ENCODE measurements at regions of chr16 and their contacts with region 1.

Region 1: DNA sequence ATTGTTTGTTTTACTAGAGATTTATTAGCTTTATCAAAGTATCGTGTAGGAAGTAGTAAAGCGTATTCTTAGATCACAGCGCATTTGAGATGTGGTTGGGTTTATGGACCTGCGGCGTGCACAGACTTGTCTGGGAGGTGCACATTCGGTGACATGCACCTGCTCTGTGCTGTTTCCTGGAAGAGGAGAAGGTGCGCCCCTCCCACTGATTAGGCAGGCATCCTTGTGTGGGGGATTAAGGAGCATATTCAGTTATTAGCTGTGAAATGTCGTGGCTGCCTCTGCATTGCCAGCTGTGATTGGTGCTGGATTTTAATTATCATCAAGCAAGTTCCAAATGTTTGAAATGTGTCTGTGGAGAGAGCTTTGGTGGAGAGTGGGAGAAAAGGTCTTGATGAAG is 903.8 kb upstream of the RBFOX1 start:
- DNase-seq: no peak
- H3K4me3 ChIP-seq: no peak overlapping the region
- H3K27ac ChIP-seq: no peak overlapping the region
- H3K4me1 ChIP-seq: no peaks in the 10 kb centered on the region
- H3K27me3 ChIP-seq: no peaks in the 10 kb centered on the region
- CTCF ChIP-seq: no peak
- EP300 ChIP-seq: no peak
- POLR2A ChIP-seq: no peak

Region 2: DNA sequence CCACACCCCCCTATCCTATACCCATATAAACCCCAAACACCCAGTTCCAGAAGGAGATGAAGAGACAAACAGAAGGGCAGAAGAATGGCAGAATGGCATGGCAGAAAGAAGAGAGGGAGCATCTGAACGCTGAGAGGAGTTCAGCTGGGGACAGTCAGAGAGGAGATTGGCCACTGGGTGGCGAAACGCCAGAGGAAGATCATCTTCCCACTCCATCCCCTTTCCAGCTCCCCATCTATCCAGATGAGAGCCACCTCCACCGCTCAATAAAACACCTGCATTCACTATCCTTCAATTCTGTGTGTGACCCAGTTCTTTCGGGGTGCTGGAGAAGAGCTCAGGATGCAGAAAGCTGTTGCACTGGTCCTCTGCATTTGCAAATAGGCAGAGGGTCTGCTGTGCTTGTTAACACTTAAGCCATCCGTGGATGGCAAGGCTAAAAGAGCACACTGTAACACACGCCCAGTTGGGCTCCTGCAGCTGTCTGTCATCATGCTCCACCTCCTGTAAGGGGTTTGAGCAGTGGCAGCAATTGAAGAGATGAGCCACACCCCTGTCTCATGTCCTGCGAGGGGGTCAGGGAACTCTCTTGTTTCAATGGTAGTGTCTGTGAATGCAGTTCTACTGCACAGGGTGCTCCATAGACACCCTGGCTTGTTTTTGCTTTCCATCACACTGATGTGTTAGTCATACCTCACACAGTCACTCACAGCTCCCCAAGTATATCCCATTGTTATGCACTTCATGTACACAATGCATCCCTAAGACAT is 131.0 kb before region 1 on chr16:
- in situ Hi-C with region 1: no loop called
- intact Hi-C with region 1: no loop called
- DNase-seq: no peak
- H3K4me3 ChIP-seq: no peak overlapping the region
- H3K27ac ChIP-seq: no peak overlapping the region
- H3K4me1 ChIP-seq: no peaks in the 10 kb centered on the region
- H3K27me3 ChIP-seq: no peaks in the 10 kb centered on the region
- CTCF ChIP-seq: no peak
- EP300 ChIP-seq: no peak
- POLR2A ChIP-seq: no peak

Region 3: GRCh38 chr16:6593799-6594198 is 164.9 kb after region 1 on chr16:
- in situ Hi-C with region 1: no loop called
- intact Hi-C with region 1: loop called (anchors 5 kb)
- DNase-seq: no peak
- H3K4me3 ChIP-seq: no peak overlapping the region
- H3K27ac ChIP-seq: no peak overlapping the region
- H3K4me1 ChIP-seq: no peaks in the 10 kb centered on the region
- H3K27me3 ChIP-seq: no peaks in the 10 kb centered on the region
- CTCF ChIP-seq: no peak
- EP300 ChIP-seq: no peak
- POLR2A ChIP-seq: no peak

Region 4: GRCh38 chr16:6656760-6657159 is 227.9 kb after region 1 on chr16:
- in situ Hi-C with region 1: no loop called
- intact Hi-C with region 1: no loop called
- DNase-seq: no peak
- H3K4me3 ChIP-seq: no peak overlapping the region
- H3K27ac ChIP-seq: no peak overlapping the region
- H3K4me1 ChIP-seq: no peaks in the 10 kb centered on the region
- H3K27me3 ChIP-seq: no peaks in the 10 kb centered on the region
- CTCF ChIP-seq: no peak
- EP300 ChIP-seq: no peak
- POLR2A ChIP-seq: no peak